MCF 10A (cell line): ENCODE measurements at regions of chr6 and their contacts with region 1.

Region 1: GRCh38 chr6:100105138-100105753 is 111.2 kb upstream of the MCHR2 start:
- DNase-seq: no peak
- H3K4me3 Mint-ChIP-seq: no peak overlapping the region
- H3K27ac Mint-ChIP-seq: no peak overlapping the region
- H3K4me1 Mint-ChIP-seq: peaks cover 5% of the 10 kb centered on the region
- H3K27me3 Mint-ChIP-seq: no peaks in the 10 kb centered on the region
- CTCF ChIP-seq: no peak

Region 2: DNA sequence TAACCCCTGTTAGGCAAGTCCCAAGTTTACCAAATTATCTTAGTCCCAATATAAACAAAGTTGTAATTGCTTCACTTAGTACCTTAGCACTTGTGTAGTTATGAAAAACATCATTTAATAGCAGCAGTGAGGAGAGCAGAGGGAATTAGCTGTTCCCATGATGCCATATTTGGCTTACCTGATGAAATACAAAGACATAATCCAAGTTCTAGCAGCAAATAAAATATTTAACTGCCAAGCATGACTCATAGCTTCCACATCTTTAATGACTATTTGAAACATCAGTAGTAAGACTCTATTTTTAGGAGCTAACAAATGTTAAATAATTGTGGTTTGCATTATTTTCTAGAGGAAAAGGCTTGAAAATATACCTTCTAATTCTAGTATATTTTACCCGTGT is 17.2 kb before region 1 on chr6:
- CTCF ChIA-PET with region 1: interaction called, 15 read pairs
- POLR2A ChIA-PET with region 1: interaction called, 3 read pairs
- intact Hi-C with region 1: no loop called
- DNase-seq: peak; percentile 77
- H3K4me3 Mint-ChIP-seq: no peak overlapping the region
- H3K27ac Mint-ChIP-seq: peak overlapping the region; percentile 88
- H3K4me1 Mint-ChIP-seq: peaks cover 21% of the 10 kb centered on the region
- H3K27me3 Mint-ChIP-seq: no peaks in the 10 kb centered on the region
- CTCF ChIP-seq: no peak

Region 3: GRCh38 chr6:100121854-100122609 is 16.8 kb after region 1 on chr6:
- CTCF ChIA-PET with region 1: interaction called, 29 read pairs
- POLR2A ChIA-PET with region 1: interaction called, 3 read pairs
- intact Hi-C with region 1: no loop called
- DNase-seq: no peak
- H3K4me3 Mint-ChIP-seq: no peak overlapping the region
- H3K27ac Mint-ChIP-seq: no peak overlapping the region
- H3K4me1 Mint-ChIP-seq: no peaks in the 10 kb centered on the region
- H3K27me3 Mint-ChIP-seq: no peaks in the 10 kb centered on the region
- CTCF ChIP-seq: no peak

Region 4: GRCh38 chr6:100184473-100184872 is 79.2 kb after region 1 on chr6:
- CTCF ChIA-PET with region 1: no interaction called
- POLR2A ChIA-PET with region 1: no interaction called
- intact Hi-C with region 1: no loop called
- DNase-seq: no peak
- H3K4me3 Mint-ChIP-seq: no peak overlapping the region
- H3K27ac Mint-ChIP-seq: no peak overlapping the region
- H3K4me1 Mint-ChIP-seq: no peaks in the 10 kb centered on the region
- H3K27me3 Mint-ChIP-seq: no peaks in the 10 kb centered on the region
- CTCF ChIP-seq: no peak